Adrenal gland (tissue), 19 donors: ENCODE measurements at regions of chr4 and their contacts with region 1.

Region 1: DNA sequence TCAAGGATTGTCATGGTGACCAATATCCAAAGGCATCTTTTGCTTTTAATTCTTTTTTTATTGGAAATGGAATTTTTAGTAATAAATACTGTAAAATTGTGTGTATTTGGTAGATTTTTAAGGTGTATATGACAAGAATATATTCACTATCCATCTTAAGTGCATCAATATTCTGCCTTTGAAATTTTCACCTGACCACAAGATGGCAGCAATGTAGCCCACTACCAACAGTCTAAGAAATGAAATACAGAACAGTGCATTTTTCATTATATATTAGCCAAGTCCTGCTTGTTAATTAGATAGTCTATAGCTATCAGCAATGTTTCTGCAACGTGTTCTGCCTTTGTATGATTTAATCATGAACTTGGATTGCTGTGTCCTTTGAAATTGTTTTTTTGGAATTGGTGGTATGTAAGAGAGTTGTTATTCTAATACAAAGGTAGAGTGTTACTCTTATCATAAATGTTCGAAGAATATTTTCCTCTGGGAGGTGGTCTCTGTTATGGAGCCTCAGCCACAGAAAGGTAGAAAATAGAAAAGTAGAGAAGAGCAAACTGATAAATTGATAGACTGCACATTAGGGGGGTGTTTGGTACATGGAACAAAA is 38.2 kb downstream of the HPGDS start:
- DNase-seq: peak in 2 of 7 donors; percentile 14 to 32
- H3K4me3 ChIP-seq: no peak overlapping the region
- H3K27ac ChIP-seq: no peak overlapping the region
- H3K4me1 ChIP-seq: peaks cover 9 to 16% of the 10 kb centered on the region in 2 donors
- H3K27me3 ChIP-seq: no peaks in the 10 kb centered on the region
- CTCF ChIP-seq: peak; percentile 37 to 69 (median 59)
- POLR2A ChIP-seq: no peak

Region 2: DNA sequence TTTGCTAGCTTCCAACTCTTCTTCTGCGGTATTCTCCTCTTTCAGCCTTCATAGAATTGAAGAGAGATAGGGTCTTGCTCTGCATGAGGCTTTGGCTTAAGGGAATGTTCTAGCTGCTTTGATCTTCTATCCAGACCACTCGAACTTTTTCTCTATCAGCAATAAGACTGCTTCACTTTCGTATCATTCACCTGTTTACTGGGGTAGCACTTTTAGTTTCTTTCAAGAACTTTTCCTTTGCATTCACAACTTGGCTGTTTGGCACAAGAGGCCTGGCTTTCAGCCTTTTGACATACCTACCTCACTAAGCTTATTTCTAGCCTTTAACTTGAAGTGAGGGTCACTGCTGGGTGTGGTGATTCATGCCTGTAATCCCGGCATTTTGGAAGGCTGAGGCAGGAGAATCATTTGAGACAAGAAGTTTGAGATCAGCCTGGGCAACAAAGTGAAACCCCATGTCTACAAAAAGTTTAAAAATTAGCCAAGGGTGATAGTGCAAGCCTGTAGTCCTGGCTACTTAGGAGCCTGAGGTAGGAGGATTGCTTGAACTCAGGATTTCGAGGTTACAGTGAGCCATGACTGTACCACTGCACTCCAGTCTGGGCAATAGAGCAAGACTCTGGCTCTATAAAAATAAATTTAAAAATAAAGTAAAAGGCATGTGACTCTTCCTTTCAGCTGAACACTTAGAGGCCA is 85.3 kb after region 1 on chr4:
- intact Hi-C with region 1: loop called in 1 of 2 experiments (anchors 5 kb)
- DNase-seq: no peak
- H3K4me3 ChIP-seq: no peak overlapping the region
- H3K27ac ChIP-seq: no peak overlapping the region
- H3K4me1 ChIP-seq: no peaks in the 10 kb centered on the region
- H3K27me3 ChIP-seq: no peaks in the 10 kb centered on the region
- CTCF ChIP-seq: no peak
- POLR2A ChIP-seq: no peak

Region 3: DNA sequence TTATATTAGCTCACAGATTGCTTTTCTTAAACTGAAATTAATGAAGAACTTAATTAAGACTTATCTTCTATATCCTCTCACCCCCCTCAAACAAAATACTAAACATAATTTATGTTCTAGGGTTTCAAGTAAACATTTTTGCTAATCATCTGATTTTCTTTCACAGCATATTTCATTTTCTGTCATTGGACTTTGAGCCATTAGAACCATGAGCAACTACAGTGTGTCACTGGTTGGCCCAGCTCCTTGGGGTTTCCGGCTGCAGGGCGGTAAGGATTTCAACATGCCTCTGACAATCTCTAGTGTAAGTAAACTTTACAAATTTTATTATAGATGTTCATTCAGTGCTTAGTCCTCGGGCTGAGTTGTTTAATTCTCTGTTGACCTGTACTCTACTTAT is 150.6 kb after region 1 on chr4:
- intact Hi-C with region 1: no loop called
- DNase-seq: peak; percentile 55 to 86 (median 81)
- H3K4me3 ChIP-seq: peak overlapping the region in 1 of 4 donors; percentile 92
- H3K27ac ChIP-seq: peak overlapping the region in 4 of 5 donors; percentile 10 to 49 (median 36)
- H3K4me1 ChIP-seq: peaks cover 27 to 69% of the 10 kb centered on the region in 2 donors
- H3K27me3 ChIP-seq: no peaks in the 10 kb centered on the region
- CTCF ChIP-seq: no peak
- POLR2A ChIP-seq: no peak

Region 4: DNA sequence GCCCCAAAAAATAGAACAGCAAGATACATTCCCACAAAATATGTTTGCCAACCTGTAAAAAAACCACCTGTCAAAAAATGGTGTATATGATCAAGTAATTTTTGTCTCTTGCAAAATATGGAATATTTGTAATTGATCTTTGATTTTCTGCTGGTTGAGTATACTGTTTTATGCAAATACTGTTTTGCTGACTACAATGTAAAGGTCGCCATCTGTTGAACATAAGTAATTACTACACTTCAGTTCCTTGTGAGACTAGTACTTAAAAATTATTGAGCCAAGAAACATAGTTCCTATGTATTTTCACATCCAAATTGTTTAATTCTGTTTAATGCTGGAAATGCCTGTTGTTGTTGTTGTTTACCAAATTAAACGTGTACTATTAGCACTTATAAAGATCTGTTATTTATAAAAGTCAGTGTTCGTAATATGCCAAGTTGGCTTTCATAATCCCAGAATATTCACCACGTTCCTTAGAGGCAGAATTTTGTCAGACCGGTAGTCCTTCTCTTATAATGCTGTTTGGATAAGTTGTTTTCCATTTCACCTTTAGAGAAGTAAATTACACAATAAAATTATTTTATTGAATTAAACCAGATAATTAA is 291.5 kb after region 1 on chr4:
- intact Hi-C with region 1: loop called in 1 of 2 experiments (anchors 10 kb)
- DNase-seq: no peak
- H3K4me3 ChIP-seq: no peak overlapping the region
- H3K27ac ChIP-seq: no peak overlapping the region
- H3K4me1 ChIP-seq: no peaks in the 10 kb centered on the region
- H3K27me3 ChIP-seq: no peaks in the 10 kb centered on the region
- CTCF ChIP-seq: peak; percentile 46 to 88 (median 70)
- POLR2A ChIP-seq: no peak

Region 5: GRCh38 chr4:95462921-95463320 is 1158.5 kb after region 1 on chr4:
- intact Hi-C with region 1: no loop called
- DNase-seq: no peak
- H3K4me3 ChIP-seq: no peak overlapping the region
- H3K27ac ChIP-seq: no peak overlapping the region
- H3K4me1 ChIP-seq: no peaks in the 10 kb centered on the region
- H3K27me3 ChIP-seq: no peaks in the 10 kb centered on the region
- CTCF ChIP-seq: no peak
- POLR2A ChIP-seq: no peak